ENCODE measurements at regions of chr10 and their contacts with region 1.

Region 1: GRCh38 chr10:3197348-3198003 is 24.9 kb upstream of the PITRM1 start:
- DNase-seq: peak; percentile 78 to 90 (median 83)
- ATAC-seq: peak; percentile 76 to 96 (median 92)
- H3K4me3 ChIP-seq: peak overlapping the region in 9 of 12 donors; percentile 18 to 43 (median 32)
- H3K27ac ChIP-seq: peak overlapping the region in 4 of 12 donors; percentile 26 to 61 (median 28)
- H3K4me1 ChIP-seq: peaks cover 0 to 23% (median 11%) of the 10 kb centered on the region in 12 donors
- H3K27me3 ChIP-seq: no peaks in the 10 kb centered on the region
- CTCF ChIP-seq: peak; percentile 81 to 96 (median 93)
- POLR2A ChIP-seq: no peak

Region 2: GRCh38 chr10:3151889-3152565 is 45.4 kb before region 1 on chr10:
- intact Hi-C with region 1: no loop called
- DNase-seq: no peak
- ATAC-seq: no peak
- H3K4me3 ChIP-seq: no peak overlapping the region
- H3K27ac ChIP-seq: no peak overlapping the region
- H3K4me1 ChIP-seq: no peaks in the 10 kb centered on the region
- H3K27me3 ChIP-seq: no peaks in the 10 kb centered on the region
- CTCF ChIP-seq: no peak
- POLR2A ChIP-seq: no peak

Region 3: GRCh38 chr10:4512671-4513240 is 1315.3 kb after region 1 on chr10:
- intact Hi-C with region 1: loop called in 1 of 10 experiments (anchors 10 kb)
- DNase-seq: peak; percentile 51 to 79 (median 69)
- ATAC-seq: peak; percentile 79 to 91 (median 88)
- H3K4me3 ChIP-seq: no peak overlapping the region
- H3K27ac ChIP-seq: peak overlapping the region; percentile 10 to 85 (median 70)
- H3K4me1 ChIP-seq: peaks cover 5 to 48% (median 30%) of the 10 kb centered on the region in 12 donors
- H3K27me3 ChIP-seq: no peaks in the 10 kb centered on the region
- CTCF ChIP-seq: peak; percentile 36 to 68 (median 54)
- POLR2A ChIP-seq: no peak

Measured in heart left ventricle (tissue), 16 donors.